CD4-positive, alpha-beta memory T cell (primary cell): ENCODE measurements at regions of chr1 and their contacts with region 1.

Region 1: DNA sequence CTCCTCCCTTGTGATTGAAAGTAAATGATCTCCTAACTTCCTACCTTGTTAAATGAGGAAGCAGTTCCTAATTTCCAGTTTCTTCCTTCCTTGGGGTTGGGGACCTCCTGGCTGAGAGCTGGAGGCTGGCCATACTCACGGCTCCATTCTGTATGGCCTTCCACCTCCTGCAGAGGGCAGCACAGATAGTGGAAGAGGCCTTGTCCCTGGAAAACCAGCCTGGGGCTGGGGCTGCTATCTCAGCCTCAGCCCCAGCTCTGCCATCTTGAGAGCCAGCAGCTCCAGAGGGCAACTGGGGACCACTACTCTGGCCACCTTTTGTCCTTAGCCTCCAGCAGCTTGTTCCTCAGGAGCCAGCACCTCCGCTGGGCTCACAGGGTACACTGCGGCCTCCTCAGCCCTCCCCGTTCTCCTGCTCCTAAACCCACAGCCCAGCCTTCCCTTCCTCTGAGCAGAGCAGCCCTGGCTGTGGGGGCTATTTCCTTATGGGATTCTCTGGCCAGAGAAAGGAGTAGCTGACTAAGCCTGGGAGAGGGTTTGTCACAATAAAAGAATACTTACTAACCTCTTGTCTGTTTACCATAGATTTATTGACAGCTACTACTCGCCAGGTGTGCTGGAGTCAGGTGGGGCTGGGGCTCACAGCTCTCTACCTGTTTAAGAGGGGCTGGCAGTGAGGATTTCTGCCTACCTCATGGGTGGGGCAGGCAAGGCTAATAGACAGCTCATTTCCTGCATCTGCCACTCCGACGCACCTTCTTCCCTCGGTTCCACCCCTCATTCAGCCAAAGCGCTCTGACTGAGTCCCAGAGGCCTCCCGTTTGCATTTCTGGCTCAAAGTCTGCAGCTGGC is 6.3 kb downstream of the TMEM234 start:
- DNase-seq: peak; percentile 45 to 65 (median 56)
- H3K4me3 ChIP-seq: no peak overlapping the region
- H3K4me3 Mint-ChIP-seq: peak overlapping the region in 3 of 8 donors; percentile 21 to 66 (median 58)
- H3K27ac ChIP-seq: no peak overlapping the region
- H3K27ac Mint-ChIP-seq: peak overlapping the region; percentile 38 to 90 (median 72)
- H3K4me1 ChIP-seq: peaks cover 17% of the 10 kb centered on the region
- H3K4me1 Mint-ChIP-seq: peaks cover 13 to 37% (median 25%) of the 10 kb centered on the region in 4 donors
- H3K27me3 ChIP-seq: no peaks in the 10 kb centered on the region
- H3K27me3 Mint-ChIP-seq: no peaks in the 10 kb centered on the region

Region 2: DNA sequence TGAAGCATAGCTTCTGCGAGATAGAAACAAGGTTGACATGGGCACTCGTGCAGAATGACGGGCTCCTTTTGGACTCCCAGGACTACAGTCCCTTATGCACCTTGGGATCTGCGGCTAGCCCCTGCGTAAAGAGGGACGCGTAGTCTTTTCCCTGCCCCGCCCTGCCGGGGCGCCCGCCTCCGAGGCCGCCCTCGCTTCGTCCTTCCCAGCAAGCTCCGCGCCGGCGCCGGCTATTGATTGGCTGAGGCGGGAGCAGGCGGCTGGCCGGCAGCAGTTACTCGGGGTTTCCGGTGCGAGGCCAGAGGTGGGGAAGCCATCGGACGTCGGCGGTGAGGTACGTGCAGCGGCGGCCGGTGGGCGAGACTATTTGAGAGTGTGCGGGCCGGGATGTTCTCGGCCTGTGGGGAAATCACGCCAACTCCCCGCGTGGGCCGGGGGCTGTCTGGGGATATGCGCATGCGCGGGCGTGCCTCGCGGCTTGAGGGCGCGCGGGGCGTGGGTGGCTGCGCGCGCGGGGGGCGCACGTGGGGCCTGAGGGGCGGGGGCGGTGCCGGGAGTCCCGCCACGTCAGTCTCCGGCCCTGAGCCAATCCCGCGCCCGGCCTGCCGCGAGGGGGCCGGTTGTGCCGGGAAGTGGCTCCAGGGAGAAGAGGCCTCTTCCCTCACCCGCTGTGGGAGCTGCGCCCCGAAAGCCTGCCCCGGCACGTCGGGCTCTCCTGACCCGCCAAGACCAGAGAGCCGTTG is 36.2 kb before region 1 on chr1 and contains the start of gene TXLNA:
- CTCF ChIA-PET with region 1: interaction called, 11 read pairs
- POLR2A ChIA-PET with region 1: no interaction called
- intact Hi-C with region 1: no loop called
- DNase-seq: peak; percentile 87 to 91 (median 88)
- H3K4me3 ChIP-seq: peak within 1 kb of the TSS; percentile 19 to 72
- H3K4me3 Mint-ChIP-seq: peak within 1 kb of the TSS; percentile 89 to 93 (median 92)
- H3K27ac ChIP-seq: peak within 1 kb of the TSS; percentile 83
- H3K27ac Mint-ChIP-seq: peak within 1 kb of the TSS; percentile 90 to 98 (median 96)
- H3K4me1 ChIP-seq: peaks cover 31% of the 10 kb centered on the region
- H3K4me1 Mint-ChIP-seq: peaks cover 24 to 53% (median 39%) of the 10 kb centered on the region in 4 donors
- H3K27me3 ChIP-seq: no peaks in the 10 kb centered on the region
- H3K27me3 Mint-ChIP-seq: no peaks in the 10 kb centered on the region
- total RNA-seq, gene TXLNA: 42.6 to 43.4 TPM

Region 3: GRCh38 chr1:32234792-32235191 is 18.9 kb after region 1 on chr1:
- CTCF ChIA-PET with region 1: interaction called, 10 read pairs
- POLR2A ChIA-PET with region 1: interaction called, 24 read pairs
- intact Hi-C with region 1: no loop called
- DNase-seq: no peak
- H3K4me3 ChIP-seq: no peak overlapping the region
- H3K4me3 Mint-ChIP-seq: no peak overlapping the region
- H3K27ac ChIP-seq: no peak overlapping the region
- H3K27ac Mint-ChIP-seq: no peak overlapping the region
- H3K4me1 ChIP-seq: peaks cover 1% of the 10 kb centered on the region
- H3K4me1 Mint-ChIP-seq: peaks cover 0 to 6% (median 3%) of the 10 kb centered on the region in 4 donors
- H3K27me3 ChIP-seq: no peaks in the 10 kb centered on the region
- H3K27me3 Mint-ChIP-seq: no peaks in the 10 kb centered on the region

Region 4: DNA sequence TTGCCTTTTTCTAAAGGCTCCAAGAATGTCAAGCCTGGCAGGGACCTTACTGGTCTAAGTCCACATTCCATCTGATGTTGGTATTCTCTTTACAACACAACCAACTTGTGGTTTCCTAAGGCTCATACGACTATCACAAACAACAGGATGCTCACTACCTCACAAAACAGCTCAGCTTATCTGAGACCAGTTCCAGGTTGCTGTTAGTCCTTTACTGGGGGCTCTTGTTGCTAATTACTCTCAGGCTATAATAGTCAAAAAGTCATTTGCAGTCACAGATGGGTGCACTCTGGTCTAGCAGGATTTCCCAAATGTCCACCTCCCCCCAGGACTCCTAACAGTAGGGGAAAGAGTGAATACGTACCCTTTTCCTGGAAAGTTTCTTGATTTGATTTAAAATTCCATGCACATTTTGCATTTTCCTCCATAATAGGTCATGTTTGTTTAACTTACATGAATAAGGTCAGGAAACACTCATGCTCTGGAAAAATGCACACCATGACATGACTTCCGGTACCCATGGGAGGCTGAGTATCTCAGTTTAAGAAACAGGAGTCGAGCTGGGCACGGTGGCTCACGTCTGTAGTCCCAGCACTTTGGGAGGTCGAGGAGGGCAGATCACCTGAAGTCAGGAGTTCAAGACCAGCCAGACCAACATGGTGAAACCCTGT is 51.2 kb after region 1 on chr1:
- CTCF ChIA-PET with region 1: interaction called, 14 read pairs
- POLR2A ChIA-PET with region 1: interaction called, 4 read pairs
- intact Hi-C with region 1: no loop called
- DNase-seq: peak in 3 of 5 donors; percentile 37 to 50 (median 48)
- H3K4me3 ChIP-seq: no peak overlapping the region
- H3K4me3 Mint-ChIP-seq: peak overlapping the region; percentile 74 to 92 (median 85)
- H3K27ac ChIP-seq: peak overlapping the region; percentile 42
- H3K27ac Mint-ChIP-seq: peak overlapping the region; percentile 82 to 99 (median 98)
- H3K4me1 ChIP-seq: peaks cover 82% of the 10 kb centered on the region
- H3K4me1 Mint-ChIP-seq: peaks cover 42 to 71% (median 54%) of the 10 kb centered on the region in 4 donors
- H3K27me3 ChIP-seq: no peaks in the 10 kb centered on the region
- H3K27me3 Mint-ChIP-seq: no peaks in the 10 kb centered on the region

Region 5: GRCh38 chr1:32335790-32336590 is 120.1 kb after region 1 on chr1 and contains the start of gene MARCKSL1:
- CTCF ChIA-PET with region 1: interaction called, 9 read pairs
- POLR2A ChIA-PET with region 1: interaction called, 27 read pairs
- intact Hi-C with region 1: loop called (anchors 1 kb)
- DNase-seq: peak; percentile 82 to 85 (median 85)
- H3K4me3 ChIP-seq: peak within 1 kb of the TSS; percentile 29 to 48
- H3K4me3 Mint-ChIP-seq: peak within 1 kb of the TSS; percentile 83 to 92 (median 87)
- H3K27ac ChIP-seq: peak within 1 kb of the TSS; percentile 45
- H3K27ac Mint-ChIP-seq: peak within 1 kb of the TSS; percentile 31 to 95 (median 85)
- H3K4me1 ChIP-seq: peaks cover 40% of the 10 kb centered on the region
- H3K4me1 Mint-ChIP-seq: peaks cover 26 to 44% (median 34%) of the 10 kb centered on the region in 4 donors
- H3K27me3 ChIP-seq: no peaks in the 10 kb centered on the region
- H3K27me3 Mint-ChIP-seq: no peaks in the 10 kb centered on the region
- total RNA-seq, gene MARCKSL1: 46.5 to 47.3 TPM

Region 6: DNA sequence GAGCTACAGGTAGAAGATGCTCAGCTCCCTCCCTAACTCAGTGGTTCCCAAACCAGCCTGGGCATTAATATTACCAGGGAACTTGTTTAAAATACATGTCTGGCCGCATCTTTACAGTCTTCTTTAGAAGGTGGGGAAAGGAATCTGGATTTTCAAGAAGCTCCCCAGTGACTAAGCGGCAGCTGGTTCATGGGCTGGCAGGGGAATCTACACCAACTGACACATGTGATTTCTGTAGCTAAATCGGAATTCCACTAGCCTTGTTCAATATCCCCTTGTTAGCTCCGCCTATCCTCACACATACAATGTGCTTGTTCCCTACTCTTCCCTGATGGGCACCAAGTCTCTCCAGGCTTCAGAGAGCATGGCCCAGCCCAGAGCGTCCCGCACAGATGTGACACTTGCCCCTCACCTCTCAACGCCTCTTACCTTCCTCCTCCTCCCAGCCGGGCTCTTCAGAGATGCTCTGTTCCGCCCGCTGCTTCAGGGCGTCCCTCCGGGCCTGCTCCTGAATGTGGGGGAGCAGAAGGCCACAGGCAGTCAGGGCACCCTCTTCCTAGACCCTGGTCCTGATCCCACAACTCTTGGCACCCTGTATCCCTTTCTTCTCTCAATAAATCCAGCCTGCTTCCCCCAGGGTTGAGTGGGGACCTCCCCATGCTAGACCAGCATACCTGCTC is 161.8 kb after region 1 on chr1:
- CTCF ChIA-PET with region 1: interaction called, 87 read pairs
- POLR2A ChIA-PET with region 1: interaction called, 13 read pairs
- intact Hi-C with region 1: loop called (anchors 1 kb)
- DNase-seq: no peak
- H3K4me3 ChIP-seq: no peak overlapping the region
- H3K4me3 Mint-ChIP-seq: no peak overlapping the region
- H3K27ac ChIP-seq: no peak overlapping the region
- H3K27ac Mint-ChIP-seq: peak overlapping the region in 2 of 7 donors; percentile 13 to 53
- H3K4me1 ChIP-seq: peaks cover 2% of the 10 kb centered on the region
- H3K4me1 Mint-ChIP-seq: peaks cover 1 to 8% (median 7%) of the 10 kb centered on the region in 4 donors
- H3K27me3 ChIP-seq: no peaks in the 10 kb centered on the region
- H3K27me3 Mint-ChIP-seq: no peaks in the 10 kb centered on the region